ENCODE measurements at regions of chr5 and their contacts with region 1.

Region 1: GRCh38 chr5:54217826-54218503 is 92.4 kb downstream of the ARL15 start:
- DNase-seq: peak; percentile 82
- ATAC-seq: peak; percentile 84
- H3K4me3 ChIP-seq: no peak overlapping the region
- H3K27ac ChIP-seq: no peak overlapping the region
- H3K4me1 ChIP-seq: peaks cover 4% of the 10 kb centered on the region; the same call in 1 of the 2 replicates
- H3K27me3 ChIP-seq: no peaks in the 10 kb centered on the region
- CTCF ChIP-seq: peak; percentile 89
- POLR2A ChIP-seq: no peak
- RAD21 ChIP-seq: peak; percentile 92

Region 2: GRCh38 chr5:52449516-52449915 is 1768.4 kb before region 1 on chr5:
- CTCF ChIA-PET with region 1: no interaction called
- POLR2A ChIA-PET with region 1: no interaction called
- dilution Hi-C with region 1: no loop called
- in situ Hi-C with region 1: no loop called
- intact Hi-C with region 1: no loop called
- DNase-seq: no peak
- ATAC-seq: no peak
- H3K4me3 ChIP-seq: no peak overlapping the region
- H3K27ac ChIP-seq: no peak overlapping the region
- H3K4me1 ChIP-seq: no peaks in the 10 kb centered on the region
- H3K27me3 ChIP-seq: no peaks in the 10 kb centered on the region
- CTCF ChIP-seq: no peak
- POLR2A ChIP-seq: no peak
- RAD21 ChIP-seq: no peak

Region 3: GRCh38 chr5:53123702-53124101 is 1094.3 kb before region 1 on chr5:
- CTCF ChIA-PET with region 1: no interaction called
- POLR2A ChIA-PET with region 1: no interaction called
- dilution Hi-C with region 1: no loop called
- in situ Hi-C with region 1: no loop called
- intact Hi-C with region 1: loop called (anchors 5 kb)
- DNase-seq: peak; percentile 40
- ATAC-seq: peak; percentile 36; the same call in 1 of the 2 replicates
- H3K4me3 ChIP-seq: no peak overlapping the region
- H3K27ac ChIP-seq: no peak overlapping the region
- H3K4me1 ChIP-seq: peaks cover 5% of the 10 kb centered on the region; the same call in 1 of the 2 replicates
- H3K27me3 ChIP-seq: no peaks in the 10 kb centered on the region; the same call in 1 of the 2 replicates
- CTCF ChIP-seq: peak; percentile 41
- POLR2A ChIP-seq: no peak
- RAD21 ChIP-seq: peak; percentile 46

Region 4: GRCh38 chr5:53262348-53262970 is 955.5 kb before region 1 on chr5:
- CTCF ChIA-PET with region 1: interaction called, 3 read pairs
- POLR2A ChIA-PET with region 1: no interaction called
- dilution Hi-C with region 1: no loop called
- in situ Hi-C with region 1: loop called (anchors 5 kb)
- intact Hi-C with region 1: loop called (anchors 1 kb)
- DNase-seq: peak; percentile 72
- ATAC-seq: peak; percentile 80
- H3K4me3 ChIP-seq: no peak overlapping the region
- H3K27ac ChIP-seq: no peak overlapping the region
- H3K4me1 ChIP-seq: peaks cover 2% of the 10 kb centered on the region; the same call in 1 of the 2 replicates
- H3K27me3 ChIP-seq: no peaks in the 10 kb centered on the region
- CTCF ChIP-seq: peak; percentile 90
- POLR2A ChIP-seq: peak; percentile 50; the same call in 1 of the 2 replicates
- RAD21 ChIP-seq: peak; percentile 96

Region 5: GRCh38 chr5:53560506-53561191 is 657.3 kb before region 1 on chr5 and contains the start of gene NDUFS4:
- CTCF ChIA-PET with region 1: no interaction called
- POLR2A ChIA-PET with region 1: no interaction called
- dilution Hi-C with region 1: no loop called
- in situ Hi-C with region 1: no loop called
- intact Hi-C with region 1: loop called (anchors 10 kb)
- DNase-seq: peak; percentile 95
- ATAC-seq: peak; percentile 98
- H3K4me3 ChIP-seq: peak within 1 kb of the TSS; percentile 98
- H3K27ac ChIP-seq: peak within 1 kb of the TSS; percentile 79
- H3K4me1 ChIP-seq: no peaks in the 10 kb centered on the region; the same call in 1 of the 2 replicates
- H3K27me3 ChIP-seq: no peaks in the 10 kb centered on the region
- CTCF ChIP-seq: peak; percentile 8; the same call in 1 of the 2 replicates
- POLR2A ChIP-seq: peak; percentile 69
- RAD21 ChIP-seq: no peak
- total RNA-seq, gene NDUFS4: 34.2 and 60.0 TPM in 2 replicates

Region 6: DNA sequence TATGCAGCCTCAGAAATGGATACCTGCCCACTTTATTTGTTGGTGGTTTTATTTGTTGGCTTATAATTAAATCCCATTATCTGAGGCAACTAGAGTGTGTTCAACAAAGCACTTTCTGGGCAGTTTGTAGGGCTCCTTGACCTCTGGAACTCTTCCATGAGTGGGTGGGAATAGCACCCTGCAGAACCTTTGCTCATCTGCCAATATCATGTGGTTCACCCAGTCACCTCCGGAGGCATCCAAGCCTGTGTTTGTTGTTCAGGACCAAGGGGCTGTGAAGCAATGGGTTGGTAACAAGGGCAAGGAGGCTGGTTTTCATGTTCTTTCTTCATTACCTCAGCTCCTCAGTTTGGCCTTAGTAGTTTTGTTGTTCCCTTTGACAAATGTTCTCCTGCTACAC is 343.6 kb before region 1 on chr5:
- CTCF ChIA-PET with region 1: no interaction called
- POLR2A ChIA-PET with region 1: no interaction called
- dilution Hi-C with region 1: no loop called
- in situ Hi-C with region 1: no loop called
- intact Hi-C with region 1: loop called (anchors 5 kb)
- DNase-seq: no peak
- ATAC-seq: no peak
- H3K4me3 ChIP-seq: no peak overlapping the region
- H3K27ac ChIP-seq: no peak overlapping the region
- H3K4me1 ChIP-seq: no peaks in the 10 kb centered on the region; the same call in 1 of the 2 replicates
- H3K27me3 ChIP-seq: no peaks in the 10 kb centered on the region
- CTCF ChIP-seq: no peak; the same call in 1 of the 2 replicates
- POLR2A ChIP-seq: no peak
- RAD21 ChIP-seq: peak; percentile 25; the same call in 1 of the 2 replicates

Region 7: DNA sequence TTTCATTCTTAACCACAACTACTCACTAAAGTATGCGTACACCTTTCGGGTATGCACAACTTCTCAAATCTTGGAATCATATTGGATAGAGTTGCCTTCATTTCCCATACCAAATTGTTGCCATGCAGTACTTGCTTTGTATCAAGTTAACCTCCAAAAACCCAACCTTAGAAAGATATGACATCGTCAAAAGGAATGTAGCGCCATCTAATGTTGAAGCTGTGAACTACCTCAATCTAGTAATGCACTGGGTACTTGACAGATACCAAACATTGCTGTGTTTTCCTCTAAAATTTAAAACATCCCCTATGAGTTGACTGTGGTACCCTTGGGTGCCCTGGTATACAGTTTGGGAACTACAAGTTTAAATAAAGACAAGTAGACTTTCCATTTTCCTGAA is 226.0 kb before region 1 on chr5:
- CTCF ChIA-PET with region 1: no interaction called
- POLR2A ChIA-PET with region 1: no interaction called
- dilution Hi-C with region 1: no loop called
- in situ Hi-C with region 1: no loop called
- intact Hi-C with region 1: loop called (anchors 10 kb)
- DNase-seq: no peak
- ATAC-seq: no peak
- H3K4me3 ChIP-seq: no peak overlapping the region
- H3K27ac ChIP-seq: no peak overlapping the region
- H3K4me1 ChIP-seq: peaks cover 7% of the 10 kb centered on the region; the same call in 1 of the 2 replicates
- H3K27me3 ChIP-seq: no peaks in the 10 kb centered on the region
- CTCF ChIP-seq: peak; percentile 32; the same call in 1 of the 2 replicates
- POLR2A ChIP-seq: no peak
- RAD21 ChIP-seq: peak; percentile 34; the same call in 1 of the 2 replicates

Measured in IMR-90 (cell line).